ENCODE measurements at regions of chr1 and their contacts with region 1.

Region 1: DNA sequence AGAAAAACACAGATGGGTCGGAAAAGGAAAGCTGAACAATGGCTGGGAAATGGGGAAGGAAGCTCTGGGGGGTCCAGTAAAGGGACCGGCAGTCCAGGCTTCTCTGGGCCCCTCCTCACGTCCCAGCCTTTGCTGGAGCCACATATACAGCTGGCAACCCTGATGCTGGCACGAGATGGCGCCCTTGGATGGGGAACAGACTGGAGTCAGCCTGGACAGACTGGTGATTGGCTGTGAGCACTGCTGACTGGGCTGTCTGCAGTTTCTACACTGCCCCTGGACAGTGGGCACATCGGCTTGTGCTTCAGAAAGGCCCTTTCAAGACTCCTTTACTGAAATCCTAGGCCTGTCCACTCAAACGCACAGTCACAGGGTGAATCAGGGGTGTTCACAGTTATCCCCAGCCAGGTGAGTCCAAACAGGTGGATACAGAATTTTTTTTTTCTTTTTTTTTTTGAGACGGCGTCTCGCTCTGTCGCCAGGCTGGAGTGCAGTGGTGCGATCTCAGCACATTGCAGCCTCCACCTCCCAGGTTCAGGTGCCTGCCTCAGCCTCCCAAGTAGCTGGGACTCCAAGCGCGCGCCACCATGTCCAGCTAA is 31.1 kb upstream of the ZBTB40 start:
- DNase-seq: peak; percentile 91
- ATAC-seq: peak; percentile 95
- H3K4me3 ChIP-seq: no peak overlapping the region
- H3K27ac ChIP-seq: no peak overlapping the region
- H3K4me1 ChIP-seq: no peaks in the 10 kb centered on the region
- H3K27me3 ChIP-seq: peaks cover 5% of the 10 kb centered on the region
- CTCF ChIP-seq: peak; percentile 77

Region 2: GRCh38 chr1:20932437-20932977 is 1488.0 kb before region 1 on chr1:
- intact Hi-C with region 1: no loop called
- DNase-seq: no peak
- ATAC-seq: no peak
- H3K4me3 ChIP-seq: no peak overlapping the region
- H3K27ac ChIP-seq: no peak overlapping the region
- H3K4me1 ChIP-seq: no peaks in the 10 kb centered on the region
- H3K27me3 ChIP-seq: no peaks in the 10 kb centered on the region
- CTCF ChIP-seq: no peak

Region 3: GRCh38 chr1:22641906-22642636 is 221.5 kb after region 1 on chr1:
- intact Hi-C with region 1: loop called (anchors 2 kb)
- DNase-seq: peak; percentile 93
- ATAC-seq: peak; percentile 80
- H3K4me3 ChIP-seq: no peak overlapping the region
- H3K27ac ChIP-seq: no peak overlapping the region
- H3K4me1 ChIP-seq: peaks cover 4% of the 10 kb centered on the region
- H3K27me3 ChIP-seq: peaks cover 9% of the 10 kb centered on the region
- CTCF ChIP-seq: peak; percentile 94